ENCODE measurements at regions of chr12 and their contacts with region 1.

Region 1: GRCh38 chr12:111405149-111405860 is 418 bp upstream of the SH2B3 start:
- DNase-seq: peak; percentile 97 to 100 (median 98)
- ATAC-seq: peak; percentile 83
- H3K4me3 ChIP-seq: peak overlapping the region; percentile 55 to 98
- H3K4me3 Mint-ChIP-seq: peak overlapping the region; percentile 85
- H3K27ac ChIP-seq: peak overlapping the region; percentile 73 to 85
- H3K27ac Mint-ChIP-seq: peak overlapping the region; percentile 89
- H3K4me1 ChIP-seq: peaks cover 54% of the 10 kb centered on the region
- H3K4me1 Mint-ChIP-seq: peaks cover 55% of the 10 kb centered on the region
- H3K27me3 ChIP-seq: no peaks in the 10 kb centered on the region
- H3K27me3 Mint-ChIP-seq: no peaks in the 10 kb centered on the region
- CTCF ChIP-seq: peak; percentile 52

Region 2: GRCh38 chr12:110379197-110379596 is 1026.1 kb before region 1 on chr12:
- CTCF ChIA-PET with region 1: no interaction called
- POLR2A ChIA-PET with region 1: no interaction called
- intact Hi-C with region 1: no loop called
- DNase-seq: no peak
- ATAC-seq: no peak
- H3K4me3 ChIP-seq: no peak overlapping the region
- H3K4me3 Mint-ChIP-seq: no peak overlapping the region
- H3K27ac ChIP-seq: no peak overlapping the region
- H3K27ac Mint-ChIP-seq: no peak overlapping the region
- H3K4me1 ChIP-seq: no peaks in the 10 kb centered on the region
- H3K4me1 Mint-ChIP-seq: no peaks in the 10 kb centered on the region
- H3K27me3 ChIP-seq: no peaks in the 10 kb centered on the region
- H3K27me3 Mint-ChIP-seq: no peaks in the 10 kb centered on the region
- CTCF ChIP-seq: no peak

Region 3: DNA sequence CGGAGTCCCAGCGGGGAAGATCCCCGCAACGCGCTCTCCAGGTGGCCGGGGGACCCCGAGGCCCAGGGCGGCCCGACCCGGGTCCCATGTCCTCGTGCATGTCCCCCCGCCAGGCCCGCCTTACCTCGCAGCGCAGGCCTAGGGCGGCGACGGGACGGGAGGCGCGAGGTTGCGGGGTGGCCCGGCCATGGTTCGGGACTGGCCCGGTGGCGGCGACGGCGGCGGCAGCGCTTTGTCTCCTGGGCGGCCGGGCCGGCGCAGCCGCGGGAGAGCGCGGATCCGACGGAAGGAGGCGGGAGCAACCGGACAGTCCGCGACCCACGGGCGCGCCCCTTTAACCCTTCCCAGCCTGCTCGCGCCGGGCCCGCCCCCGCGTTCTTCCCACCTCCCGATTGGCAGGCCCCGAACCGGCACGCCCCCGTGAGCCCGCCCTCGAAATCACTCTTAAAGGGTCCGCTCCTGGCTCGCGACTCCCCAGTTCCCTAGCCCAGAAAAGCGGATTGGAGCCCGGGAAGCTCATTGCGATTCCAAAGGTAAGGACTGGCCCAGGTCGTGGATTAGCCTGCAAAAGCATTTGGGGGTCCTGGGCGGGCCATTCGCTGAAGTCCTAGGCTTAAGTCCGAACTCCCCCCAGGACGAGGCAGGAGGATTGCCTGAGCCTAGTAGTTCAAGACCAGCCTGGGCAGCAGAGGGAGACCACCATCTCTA is 36.4 kb before region 1 on chr12 and contains the start of gene PHETA1:
- CTCF ChIA-PET with region 1: no interaction called
- POLR2A ChIA-PET with region 1: no interaction called
- intact Hi-C with region 1: loop called in 1 of 2 experiments (anchors 1 kb)
- DNase-seq: peak; percentile 41 to 83 (median 73)
- ATAC-seq: peak; percentile 94
- H3K4me3 ChIP-seq: peak within 1 kb of the TSS; percentile 64 to 66
- H3K4me3 Mint-ChIP-seq: peak within 1 kb of the TSS; percentile 87
- H3K27ac ChIP-seq: no peak within 1 kb of the TSS
- H3K27ac Mint-ChIP-seq: peak within 1 kb of the TSS; percentile 37
- H3K4me1 ChIP-seq: peaks cover 20% of the 10 kb centered on the region
- H3K4me1 Mint-ChIP-seq: peaks cover 23% of the 10 kb centered on the region
- H3K27me3 ChIP-seq: no peaks in the 10 kb centered on the region
- H3K27me3 Mint-ChIP-seq: peaks cover 2% of the 10 kb centered on the region
- CTCF ChIP-seq: no peak
- total RNA-seq, gene PHETA1: 0.79 to 0.83 TPM

Region 4: DNA sequence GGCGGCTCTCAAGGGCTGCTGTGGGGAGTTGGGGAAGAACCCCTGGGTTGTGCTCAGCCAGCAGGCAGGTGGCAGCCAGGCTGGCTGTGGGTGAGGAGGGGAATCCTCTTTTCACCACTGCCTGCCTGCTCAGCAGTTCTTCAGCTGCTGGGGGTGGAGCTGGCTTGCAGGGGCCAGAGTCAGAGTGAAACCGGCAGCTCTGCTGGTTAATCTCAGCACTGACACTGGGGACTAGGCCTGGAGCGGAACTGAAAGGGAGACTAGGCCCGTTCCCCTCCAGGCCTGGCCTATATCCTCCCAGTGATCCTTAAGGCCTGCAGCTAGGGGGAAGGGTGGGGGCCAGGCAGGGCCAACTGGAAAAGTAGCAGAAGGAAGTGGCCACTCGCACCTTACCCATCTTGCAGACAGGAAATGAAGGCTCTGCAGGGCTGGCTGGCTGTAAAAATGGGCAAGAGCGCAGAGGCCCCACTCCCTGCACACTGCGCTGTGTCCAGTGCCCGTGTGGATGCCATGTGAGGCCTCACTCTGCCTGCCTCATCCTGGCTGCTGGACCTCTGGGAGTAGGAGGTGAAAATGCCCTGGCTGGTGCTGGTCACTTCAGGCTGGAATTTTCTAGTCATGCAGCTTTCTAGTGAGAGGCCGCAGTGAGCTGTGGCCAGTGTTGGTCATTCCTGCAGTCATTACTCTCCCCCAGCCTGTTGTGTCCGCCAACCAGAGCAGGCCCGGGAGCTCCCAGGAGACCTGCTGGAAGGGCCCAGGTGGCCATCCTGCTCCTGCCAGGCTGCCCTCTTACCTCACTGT is 39.8 kb after region 1 on chr12:
- CTCF ChIA-PET with region 1: interaction called, 1,191 read pairs
- POLR2A ChIA-PET with region 1: interaction called, 20 read pairs
- intact Hi-C with region 1: no loop called
- DNase-seq: peak; percentile 59 to 95 (median 75)
- ATAC-seq: peak; percentile 96
- H3K4me3 ChIP-seq: peak overlapping the region; percentile 10 to 22
- H3K4me3 Mint-ChIP-seq: peak overlapping the region; percentile 66
- H3K27ac ChIP-seq: peak overlapping the region; percentile 38 to 81
- H3K27ac Mint-ChIP-seq: peak overlapping the region; percentile 90
- H3K4me1 ChIP-seq: peaks cover 44% of the 10 kb centered on the region
- H3K4me1 Mint-ChIP-seq: peaks cover 65% of the 10 kb centered on the region
- H3K27me3 ChIP-seq: no peaks in the 10 kb centered on the region
- H3K27me3 Mint-ChIP-seq: no peaks in the 10 kb centered on the region
- CTCF ChIP-seq: no peak

Region 5: GRCh38 chr12:111599459-111600204 is 194.3 kb after region 1 on chr12:
- CTCF ChIA-PET with region 1: no interaction called
- POLR2A ChIA-PET with region 1: no interaction called
- intact Hi-C with region 1: loop called (anchors 2 to 10 kb)
- DNase-seq: peak; percentile 70 to 95 (median 87)
- ATAC-seq: peak; percentile 75
- H3K4me3 ChIP-seq: peak overlapping the region; percentile 68 to 97
- H3K4me3 Mint-ChIP-seq: peak overlapping the region; percentile 90
- H3K27ac ChIP-seq: peak overlapping the region; percentile 72 to 77
- H3K27ac Mint-ChIP-seq: peak overlapping the region; percentile 91
- H3K4me1 ChIP-seq: peaks cover 20% of the 10 kb centered on the region
- H3K4me1 Mint-ChIP-seq: peaks cover 34% of the 10 kb centered on the region
- H3K27me3 ChIP-seq: no peaks in the 10 kb centered on the region
- H3K27me3 Mint-ChIP-seq: no peaks in the 10 kb centered on the region
- CTCF ChIP-seq: no peak

Region 6: DNA sequence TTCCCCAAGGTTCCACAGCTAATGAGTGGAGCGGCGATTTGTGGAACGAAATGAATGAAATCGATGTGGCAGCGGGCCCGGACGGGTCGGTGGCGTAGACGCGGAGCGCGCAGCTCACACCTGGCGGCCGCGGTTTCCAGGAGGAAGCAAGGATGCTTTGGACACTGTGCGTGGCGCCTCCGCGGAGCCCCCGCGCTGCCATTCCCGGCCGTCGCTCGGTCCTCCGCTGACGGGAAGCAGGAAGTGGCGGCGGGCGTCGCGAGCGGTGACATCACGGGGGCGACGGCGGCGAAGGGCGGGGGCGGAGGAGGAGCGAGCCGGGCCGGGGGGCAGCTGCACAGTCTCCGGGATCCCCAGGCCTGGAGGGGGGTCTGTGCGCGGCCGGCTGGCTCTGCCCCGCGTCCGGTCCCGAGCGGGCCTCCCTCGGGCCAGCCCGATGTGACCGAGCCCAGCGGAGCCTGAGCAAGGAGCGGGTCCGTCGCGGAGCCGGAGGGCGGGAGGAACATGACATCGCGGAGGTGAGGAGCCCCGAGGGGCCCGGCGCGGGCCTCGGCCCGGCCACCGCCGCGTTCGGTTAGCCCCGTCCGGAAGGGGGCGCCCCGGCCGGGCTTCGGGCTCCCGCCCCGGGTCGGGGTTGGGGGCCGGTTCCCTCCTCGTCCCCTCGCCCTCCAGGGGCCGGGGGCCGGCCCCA is 1013.4 kb after region 1 on chr12 and contains the start of gene PTPN11:
- CTCF ChIA-PET with region 1: no interaction called
- POLR2A ChIA-PET with region 1: no interaction called
- intact Hi-C with region 1: loop called in 1 of 2 experiments (anchors 5 kb)
- DNase-seq: peak; percentile 81 to 96 (median 89)
- ATAC-seq: peak; percentile 89
- H3K4me3 ChIP-seq: peak within 1 kb of the TSS; percentile 75 to 98
- H3K4me3 Mint-ChIP-seq: peak within 1 kb of the TSS; percentile 94
- H3K27ac ChIP-seq: peak within 1 kb of the TSS; percentile 89 to 97
- H3K27ac Mint-ChIP-seq: peak within 1 kb of the TSS; percentile 95
- H3K4me1 ChIP-seq: peaks cover 21% of the 10 kb centered on the region
- H3K4me1 Mint-ChIP-seq: peaks cover 40% of the 10 kb centered on the region
- H3K27me3 ChIP-seq: no peaks in the 10 kb centered on the region
- H3K27me3 Mint-ChIP-seq: no peaks in the 10 kb centered on the region
- CTCF ChIP-seq: no peak
- total RNA-seq, gene PTPN11: 56.0 to 57.9 TPM

Measured in CD8-positive, alpha-beta T cell (primary cell).